Adrenal gland (tissue), 19 donors: ENCODE measurements at regions of chr12 and their contacts with region 1.

Region 1: DNA sequence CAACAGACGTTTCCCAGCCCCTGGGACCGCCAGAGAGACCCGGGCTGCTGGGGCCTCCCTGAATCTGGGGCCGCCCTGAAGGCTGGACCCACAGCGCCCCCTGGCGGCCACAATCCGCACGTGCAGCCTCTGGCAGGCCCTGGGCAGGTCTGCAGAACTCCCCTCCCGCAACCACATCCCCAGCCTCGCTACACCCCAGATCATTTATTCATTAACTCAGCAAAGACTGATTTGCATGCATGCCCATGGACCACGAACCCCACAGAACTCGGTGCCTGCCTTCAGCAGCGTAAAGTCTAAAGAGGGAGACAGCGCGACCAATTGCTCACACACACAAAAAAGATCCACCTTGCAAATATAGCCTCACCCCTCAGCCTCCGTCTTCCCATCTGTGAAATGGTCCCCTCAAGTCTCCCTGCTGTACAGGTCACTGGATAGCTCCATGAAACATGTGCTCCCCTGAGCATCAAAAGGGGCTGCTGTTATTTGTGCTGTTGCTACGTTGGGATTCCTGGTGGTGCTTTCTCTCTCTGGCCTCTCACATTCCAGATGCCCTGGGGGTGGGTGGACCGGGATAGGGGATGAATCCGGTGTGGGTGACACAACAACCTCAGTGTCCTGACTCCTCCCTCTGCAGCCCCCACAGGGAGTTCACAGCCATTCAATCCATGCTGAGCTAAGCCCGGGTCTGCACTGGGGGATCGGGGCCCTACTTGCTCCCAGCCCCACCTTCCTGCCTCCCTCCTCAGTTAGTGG is 96.4 kb downstream of the SCARB1 start:
- DNase-seq: peak; percentile 59 to 92 (median 82)
- H3K4me3 ChIP-seq: no peak overlapping the region
- H3K27ac ChIP-seq: peak overlapping the region in 3 of 5 donors; percentile 38 to 82 (median 51)
- H3K4me1 ChIP-seq: peaks cover 7 to 34% of the 10 kb centered on the region in 2 donors
- H3K27me3 ChIP-seq: no peaks in the 10 kb centered on the region
- CTCF ChIP-seq: peak; percentile 96 to 100 (median 99)
- POLR2A ChIP-seq: no peak

Region 2: DNA sequence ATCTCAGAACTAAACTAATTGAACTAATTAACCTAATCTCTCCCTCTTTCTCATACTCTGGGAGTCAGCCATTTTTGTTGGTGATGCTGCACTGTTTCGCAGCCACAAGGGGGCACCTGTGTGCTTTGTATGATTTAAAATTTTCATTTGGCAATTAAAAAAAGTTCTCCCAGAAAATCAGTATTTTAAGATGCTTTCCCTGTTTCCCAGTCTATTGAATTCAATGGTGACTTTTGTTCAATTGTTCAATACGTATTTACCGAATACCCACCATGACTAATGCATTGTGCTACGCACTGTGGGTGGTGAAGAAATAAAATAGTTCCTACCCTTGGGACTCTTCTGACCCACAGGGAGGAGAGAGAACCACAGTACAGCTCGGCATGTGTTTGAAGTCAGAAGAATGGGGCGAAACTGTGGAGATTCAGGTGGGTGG is 730.6 kb before region 1 on chr12:
- intact Hi-C with region 1: loop called (anchors 5 to 10 kb)
- DNase-seq: peak in 6 of 7 donors; percentile 30 to 73 (median 54)
- H3K4me3 ChIP-seq: no peak overlapping the region
- H3K27ac ChIP-seq: no peak overlapping the region
- H3K4me1 ChIP-seq: no peaks in the 10 kb centered on the region
- H3K27me3 ChIP-seq: no peaks in the 10 kb centered on the region
- CTCF ChIP-seq: peak; percentile 70 to 96 (median 90)
- POLR2A ChIP-seq: no peak

Region 3: DNA sequence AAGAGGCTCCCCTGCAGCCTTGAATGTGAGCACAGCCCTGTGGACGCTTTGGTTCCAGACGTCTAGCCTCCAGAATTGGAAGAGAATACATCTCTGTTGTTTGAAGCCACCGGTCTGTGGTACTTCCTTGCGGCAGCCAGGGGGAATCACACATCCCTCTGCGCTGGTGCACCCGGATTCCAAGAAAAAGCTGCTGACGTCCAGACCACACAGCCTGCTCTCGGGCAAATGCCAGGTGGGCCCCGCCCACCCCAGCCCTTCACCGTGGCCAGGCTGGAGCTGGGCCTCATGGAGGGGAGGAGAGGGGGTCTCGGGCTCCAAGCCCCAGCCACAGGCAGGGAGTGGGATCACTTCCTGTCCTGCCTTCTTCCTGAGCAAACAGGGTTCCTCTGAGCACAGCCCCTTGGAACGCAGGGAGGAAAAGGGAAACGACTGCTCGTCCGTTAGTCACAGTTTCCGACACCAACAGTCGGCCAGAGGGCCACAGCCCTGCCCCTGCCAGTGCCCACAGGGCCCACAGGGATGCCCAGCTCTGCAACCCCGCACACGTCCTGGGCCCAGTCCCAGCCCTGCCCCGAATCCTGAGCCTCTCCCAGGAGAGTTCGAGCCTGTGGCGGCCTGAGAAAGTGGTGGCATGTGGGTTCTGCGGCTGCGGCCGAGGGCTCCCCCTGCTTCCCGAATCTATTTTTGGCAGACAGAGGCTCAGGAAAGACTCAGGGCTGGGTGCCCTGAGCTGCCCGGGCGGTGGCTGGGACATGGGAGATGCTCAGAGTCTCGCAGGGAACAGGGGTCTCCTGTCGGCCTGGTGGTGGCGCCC is 387.1 kb before region 1 on chr12:
- intact Hi-C with region 1: loop called (anchors 10 kb)
- DNase-seq: peak; percentile 69 to 90 (median 82)
- H3K4me3 ChIP-seq: no peak overlapping the region
- H3K27ac ChIP-seq: peak overlapping the region; percentile 83 to 99 (median 93)
- H3K4me1 ChIP-seq: peaks cover 34 to 59% of the 10 kb centered on the region in 2 donors
- H3K27me3 ChIP-seq: no peaks in the 10 kb centered on the region
- CTCF ChIP-seq: peak; percentile 39 to 74 (median 55)
- POLR2A ChIP-seq: peak; percentile 32

Region 4: DNA sequence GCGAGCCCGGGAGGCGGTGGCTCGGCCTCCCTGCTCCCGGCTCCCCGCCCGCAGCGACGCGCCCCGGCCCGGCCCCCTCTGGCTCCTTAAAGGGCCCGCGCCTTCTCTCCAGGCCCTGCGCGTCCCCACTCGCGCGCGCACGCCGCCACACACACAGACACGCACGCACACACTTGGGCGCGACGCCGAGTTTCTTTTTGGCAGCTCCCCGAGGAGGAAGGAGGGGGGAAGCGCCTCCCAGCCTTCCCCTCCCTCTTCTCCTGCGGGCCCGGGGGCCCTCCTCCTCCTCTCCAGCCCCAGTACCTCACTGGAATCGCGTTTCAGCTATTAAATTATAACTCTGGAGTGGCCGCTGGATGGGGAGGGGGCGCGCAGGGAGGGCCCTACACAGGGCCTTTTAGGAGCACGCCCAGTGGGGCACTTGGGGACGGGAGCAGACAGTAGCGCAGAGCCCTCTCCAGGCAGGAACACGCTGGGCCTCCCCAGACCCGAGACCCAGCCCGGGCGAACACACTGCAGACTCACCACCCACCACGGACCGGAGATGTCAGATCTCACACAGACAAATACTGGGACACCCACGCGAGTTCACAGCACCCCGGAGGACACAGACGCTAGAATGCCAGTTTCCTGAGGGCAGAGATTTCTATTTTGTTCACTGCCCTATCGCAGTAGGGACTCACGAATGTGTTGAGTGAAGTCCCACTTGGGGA is 199.4 kb before region 1 on chr12:
- intact Hi-C with region 1: loop called (anchors 5 kb)
- DNase-seq: peak; percentile 93 to 97 (median 96)
- H3K4me3 ChIP-seq: peak overlapping the region in 2 of 4 donors; percentile 6 to 47
- H3K27ac ChIP-seq: peak overlapping the region; percentile 72 to 99 (median 88)
- H3K4me1 ChIP-seq: peaks cover 40 to 48% of the 10 kb centered on the region in 2 donors
- H3K27me3 ChIP-seq: no peaks in the 10 kb centered on the region
- CTCF ChIP-seq: peak in 1 of 6 experiments; percentile 7
- POLR2A ChIP-seq: peak in 1 of 2 donors; percentile 18

Region 5: DNA sequence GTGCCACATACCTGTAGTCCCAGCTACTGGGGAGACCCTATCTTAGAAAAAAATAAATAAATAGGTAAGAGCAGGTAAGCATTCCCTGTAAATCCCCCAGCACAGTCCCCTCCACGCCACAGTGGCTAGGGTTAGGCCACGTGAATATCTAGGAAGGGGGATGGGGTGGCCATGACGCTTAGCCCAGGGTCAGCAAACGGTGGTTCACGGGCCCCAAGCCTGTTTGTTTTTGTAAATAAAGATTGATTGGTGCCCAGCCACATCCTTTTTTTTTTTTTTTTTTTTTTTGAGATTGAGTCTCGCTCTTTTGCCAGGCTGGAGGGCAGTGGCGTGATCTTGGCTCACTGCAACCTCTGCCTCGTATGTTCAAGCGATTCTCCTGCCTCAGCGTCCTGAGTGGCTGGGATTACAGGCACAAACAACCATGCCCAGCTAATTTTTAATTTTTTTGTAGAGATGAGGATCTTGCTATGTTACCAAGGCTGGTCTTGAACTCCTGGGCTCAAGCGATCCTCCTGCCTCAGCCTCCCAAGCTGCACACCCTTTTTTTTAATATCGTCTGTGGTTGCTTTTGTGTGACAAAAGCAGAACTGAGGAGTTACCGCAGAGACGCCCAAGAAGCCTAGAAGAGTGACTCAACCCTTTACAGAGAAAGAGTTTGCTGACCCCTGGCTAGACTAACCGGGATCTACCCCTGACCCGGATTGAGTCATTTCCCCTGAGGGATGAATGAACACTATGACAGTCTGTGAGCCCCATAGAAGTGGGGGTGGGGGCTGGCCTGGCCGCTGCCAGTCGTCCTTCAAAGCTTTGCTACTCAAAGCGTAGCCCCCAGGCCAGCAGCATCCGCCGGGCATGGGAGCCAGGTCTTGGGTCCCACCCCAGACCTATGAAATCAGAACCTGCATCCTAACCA is 86.1 kb before region 1 on chr12:
- intact Hi-C with region 1: loop called in 1 of 2 experiments (anchors 10 kb)
- DNase-seq: peak; percentile 36 to 92 (median 63)
- H3K4me3 ChIP-seq: no peak overlapping the region
- H3K27ac ChIP-seq: peak overlapping the region in 3 of 5 donors; percentile 66 to 87 (median 78)
- H3K4me1 ChIP-seq: peaks cover 47 to 82% of the 10 kb centered on the region in 2 donors
- H3K27me3 ChIP-seq: no peaks in the 10 kb centered on the region
- CTCF ChIP-seq: peak in 4 of 6 experiments; percentile 6 to 47 (median 41)
- POLR2A ChIP-seq: no peak

Region 6: GRCh38 chr12:124727264-124727721 is 40.0 kb before region 1 on chr12:
- intact Hi-C with region 1: no loop called
- DNase-seq: peak; percentile 88 to 98 (median 97)
- H3K4me3 ChIP-seq: no peak overlapping the region
- H3K27ac ChIP-seq: peak overlapping the region; percentile 84 to 91 (median 88)
- H3K4me1 ChIP-seq: peaks cover 8 to 32% of the 10 kb centered on the region in 2 donors
- H3K27me3 ChIP-seq: no peaks in the 10 kb centered on the region
- CTCF ChIP-seq: no peak
- POLR2A ChIP-seq: peak in 1 of 2 donors; percentile 66